ENCODE measurements at regions of chr16 and their contacts with region 1.

Region 1: GRCh38 chr16:11396241-11397048 is 51.2 kb downstream of the RMI2 start:
- DNase-seq: peak; percentile 77 to 84 (median 82)
- H3K4me3 ChIP-seq: no peak overlapping the region
- H3K27ac ChIP-seq: no peak overlapping the region
- H3K4me1 ChIP-seq: peaks cover 2% of the 10 kb centered on the region
- H3K27me3 ChIP-seq: no peaks in the 10 kb centered on the region
- CTCF ChIP-seq: peak; percentile 98
- EP300 ChIP-seq: no peak
- POLR2A ChIP-seq: peak; percentile 21

Region 2: GRCh38 chr16:11535471-11535870 is 139.0 kb after region 1 on chr16:
- intact Hi-C with region 1: loop called in 1 of 4 experiments (anchors 5 kb)
- DNase-seq: no peak
- H3K4me3 ChIP-seq: no peak overlapping the region
- H3K27ac ChIP-seq: no peak overlapping the region
- H3K4me1 ChIP-seq: no peaks in the 10 kb centered on the region
- H3K27me3 ChIP-seq: no peaks in the 10 kb centered on the region
- CTCF ChIP-seq: no peak
- EP300 ChIP-seq: no peak
- POLR2A ChIP-seq: no peak

Region 3: DNA sequence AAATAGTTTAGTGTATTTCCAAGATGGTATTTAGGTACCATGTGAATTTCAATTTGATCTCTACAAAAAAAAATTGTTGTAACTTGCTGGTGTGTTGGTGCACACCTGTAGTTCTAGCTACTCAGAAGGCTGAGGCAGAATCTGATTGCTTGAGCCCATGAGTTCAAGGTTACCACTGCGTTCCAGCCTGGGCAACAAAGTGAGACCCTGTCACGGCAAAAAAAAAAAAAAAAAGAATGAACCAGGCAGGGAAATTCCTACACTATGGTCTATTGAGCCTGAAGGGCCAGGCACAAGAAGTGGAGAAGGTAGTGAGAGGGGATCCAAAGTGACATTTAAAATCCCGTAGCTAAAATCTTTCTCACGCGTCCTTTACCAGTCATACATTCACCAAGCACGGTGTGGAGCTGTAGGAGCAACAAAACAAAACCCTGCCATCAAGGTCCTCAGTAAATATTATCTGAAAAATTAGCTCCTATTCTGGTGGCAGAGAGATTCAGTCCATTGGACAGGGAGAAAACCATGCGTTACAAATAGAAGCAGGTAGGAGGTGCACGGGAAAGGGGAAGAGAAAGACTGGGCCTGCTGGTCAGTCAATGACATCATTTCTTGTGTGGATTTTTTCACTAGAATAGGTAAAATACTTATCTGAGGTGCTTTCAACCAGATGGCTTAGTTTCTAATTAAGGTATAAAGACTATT is 319.0 kb after region 1 on chr16:
- intact Hi-C with region 1: loop called (anchors 5 to 10 kb)
- DNase-seq: no peak
- H3K4me3 ChIP-seq: no peak overlapping the region
- H3K27ac ChIP-seq: no peak overlapping the region
- H3K4me1 ChIP-seq: no peaks in the 10 kb centered on the region
- H3K27me3 ChIP-seq: no peaks in the 10 kb centered on the region
- CTCF ChIP-seq: no peak
- EP300 ChIP-seq: no peak
- POLR2A ChIP-seq: no peak

Region 4: GRCh38 chr16:11806721-11807120 is 410.3 kb after region 1 on chr16:
- intact Hi-C with region 1: loop called in 3 of 4 experiments (anchors 5 to 10 kb)
- DNase-seq: no peak
- H3K4me3 ChIP-seq: no peak overlapping the region
- H3K27ac ChIP-seq: no peak overlapping the region
- H3K4me1 ChIP-seq: no peaks in the 10 kb centered on the region
- H3K27me3 ChIP-seq: no peaks in the 10 kb centered on the region
- CTCF ChIP-seq: no peak
- EP300 ChIP-seq: no peak
- POLR2A ChIP-seq: no peak

Region 5: DNA sequence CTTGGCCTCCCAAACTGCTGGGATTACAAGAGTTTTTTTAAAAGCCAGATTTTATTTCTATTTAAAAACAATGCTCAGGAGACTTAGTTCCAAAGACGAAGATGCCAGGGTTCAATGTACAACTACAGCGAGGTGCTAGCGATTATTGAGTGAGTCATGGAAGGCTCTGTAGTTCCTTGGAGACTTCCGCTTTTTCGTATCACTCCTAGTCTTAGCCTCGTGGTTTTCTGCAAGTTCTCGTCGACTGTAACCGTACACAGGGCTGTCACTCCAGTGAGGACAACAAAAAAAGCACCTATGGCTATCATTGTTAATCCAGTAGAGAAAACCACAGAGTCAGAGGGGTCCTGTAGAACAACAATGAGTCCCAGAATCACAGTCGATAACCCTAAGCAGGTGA is 423.4 kb after region 1 on chr16:
- intact Hi-C with region 1: loop called in 3 of 4 experiments (anchors 5 to 10 kb)
- DNase-seq: no peak
- H3K4me3 ChIP-seq: no peak overlapping the region
- H3K27ac ChIP-seq: no peak overlapping the region
- H3K4me1 ChIP-seq: no peaks in the 10 kb centered on the region
- H3K27me3 ChIP-seq: no peaks in the 10 kb centered on the region
- CTCF ChIP-seq: no peak
- EP300 ChIP-seq: no peak
- POLR2A ChIP-seq: no peak

Region 6: GRCh38 chr16:12067714-12068401 is 671.4 kb after region 1 on chr16:
- intact Hi-C with region 1: loop called in 3 of 4 experiments (anchors 5 to 10 kb)
- DNase-seq: peak; percentile 29 to 76 (median 42)
- H3K4me3 ChIP-seq: no peak overlapping the region
- H3K27ac ChIP-seq: no peak overlapping the region
- H3K4me1 ChIP-seq: peaks cover 9% of the 10 kb centered on the region
- H3K27me3 ChIP-seq: no peaks in the 10 kb centered on the region
- CTCF ChIP-seq: peak; percentile 78 to 86 (median 81)
- EP300 ChIP-seq: no peak
- POLR2A ChIP-seq: no peak